Head of caudate nucleus (tissue), 42 donors: ENCODE measurements at regions of chr10 and their contacts with region 1.

Region 1: GRCh38 chr10:22251751-22252223 is 34.0 kb upstream of the EBLN1 start:
- DNase-seq: peak; percentile 55 to 91 (median 79)

Region 2: DNA sequence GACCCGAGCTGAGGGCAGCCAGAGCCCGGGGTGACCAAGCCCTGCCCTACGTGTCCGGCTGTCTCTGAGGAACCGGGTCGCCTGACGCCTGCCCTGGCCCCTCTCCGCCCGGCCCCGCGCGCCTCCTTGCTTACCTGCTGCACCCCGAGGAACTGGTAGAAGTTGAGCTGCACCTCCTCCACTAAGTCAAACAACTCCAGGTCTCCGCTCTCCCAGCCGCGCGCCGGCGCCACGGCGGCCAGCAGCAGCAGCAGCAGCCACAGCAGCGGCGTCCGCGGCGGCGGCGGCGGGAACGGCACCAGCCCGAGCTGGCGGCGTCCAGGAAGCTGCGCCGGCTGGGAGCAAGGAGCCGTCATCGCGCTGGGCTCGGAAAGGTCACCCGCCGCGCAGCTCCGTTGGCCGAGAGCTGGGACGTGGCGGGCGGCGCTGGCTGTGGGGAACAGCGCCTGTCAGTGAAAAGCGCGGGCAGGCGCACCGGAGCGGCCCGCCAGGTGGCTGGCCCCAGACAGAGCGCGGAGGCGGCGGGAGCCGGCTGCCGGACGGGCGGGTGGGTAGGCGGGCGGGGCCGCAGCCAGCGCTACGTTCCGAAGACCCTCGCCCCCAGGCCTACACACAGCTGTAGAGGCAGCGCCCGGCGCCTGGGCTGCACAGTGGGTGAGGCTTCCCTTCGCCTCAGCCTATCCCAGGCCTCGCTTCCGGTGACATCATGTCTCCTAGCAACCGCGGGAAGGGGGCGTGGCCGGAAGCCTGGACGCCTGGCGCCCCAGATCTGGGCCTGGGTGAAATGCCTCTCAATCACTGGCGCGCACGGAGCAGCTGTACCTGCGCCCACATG is 248.5 kb before region 1 on chr10 and contains the start of gene DNAJC1:
- intact Hi-C with region 1: loop called (anchors 10 kb)
- DNase-seq: peak; percentile 97 to 99 (median 99)

Region 3: DNA sequence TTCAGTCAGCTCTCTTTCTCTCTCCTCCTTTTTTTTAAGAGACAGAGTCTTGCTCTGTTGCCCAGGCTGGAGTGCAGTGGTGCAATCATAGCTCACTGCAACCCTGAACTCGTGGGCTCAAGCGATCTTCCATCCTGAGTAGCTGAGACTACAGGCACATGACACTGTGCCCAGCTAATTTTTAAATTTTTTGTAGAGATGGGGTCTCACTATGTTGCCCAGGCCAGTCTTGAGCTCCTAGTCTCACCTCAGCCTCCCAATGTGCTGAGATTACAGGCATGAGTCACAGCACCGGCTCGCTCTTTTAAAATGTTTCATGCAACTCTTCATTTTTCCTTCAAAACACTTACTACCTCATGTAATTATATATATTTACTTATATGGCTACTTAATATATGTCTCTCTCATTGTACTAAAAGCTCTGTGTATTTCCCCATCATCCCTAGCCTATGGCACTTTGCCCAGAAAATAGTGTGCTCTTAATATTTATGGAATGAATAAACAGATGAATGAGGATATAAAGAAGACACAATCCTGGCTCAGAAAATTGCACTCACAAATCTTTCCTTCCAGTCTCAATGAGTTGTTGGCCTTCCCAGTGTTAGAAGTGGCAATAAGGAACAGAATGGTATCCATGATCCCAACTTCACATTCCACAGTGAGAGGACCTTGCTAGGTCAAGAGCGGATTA is 67.9 kb before region 1 on chr10:
- intact Hi-C with region 1: no loop called
- DNase-seq: no peak

Region 4: GRCh38 chr10:22316285-22317120 is 64.7 kb after region 1 on chr10 and contains the start of gene COMMD3:
- intact Hi-C with region 1: loop called (anchors 5 kb)
- DNase-seq: peak; percentile 77 to 95 (median 90)